Breast epithelium (tissue), 4 donors: ENCODE measurements at regions of chr9 and their contacts with region 1.

Region 1: GRCh38 chr9:73459817-73460216 is 308.2 kb downstream of the ANXA1 start:
- DNase-seq: no peak
- H3K4me3 ChIP-seq: no peak overlapping the region
- H3K27ac ChIP-seq: no peak overlapping the region
- H3K4me1 ChIP-seq: no peaks in the 10 kb centered on the region
- H3K27me3 ChIP-seq: no peaks in the 10 kb centered on the region
- CTCF ChIP-seq: no peak
- POLR2A ChIP-seq: no peak

Region 2: GRCh38 chr9:73565833-73566465 is 106.1 kb after region 1 on chr9:
- intact Hi-C with region 1: loop called (anchors 5 kb)
- DNase-seq: no peak
- H3K4me3 ChIP-seq: no peak overlapping the region
- H3K27ac ChIP-seq: no peak overlapping the region
- H3K4me1 ChIP-seq: no peaks in the 10 kb centered on the region
- H3K27me3 ChIP-seq: no peaks in the 10 kb centered on the region
- CTCF ChIP-seq: no peak
- POLR2A ChIP-seq: no peak